HEK293T (cell line): ENCODE measurements at regions of chr3 and their contacts with region 1.

Region 1: DNA sequence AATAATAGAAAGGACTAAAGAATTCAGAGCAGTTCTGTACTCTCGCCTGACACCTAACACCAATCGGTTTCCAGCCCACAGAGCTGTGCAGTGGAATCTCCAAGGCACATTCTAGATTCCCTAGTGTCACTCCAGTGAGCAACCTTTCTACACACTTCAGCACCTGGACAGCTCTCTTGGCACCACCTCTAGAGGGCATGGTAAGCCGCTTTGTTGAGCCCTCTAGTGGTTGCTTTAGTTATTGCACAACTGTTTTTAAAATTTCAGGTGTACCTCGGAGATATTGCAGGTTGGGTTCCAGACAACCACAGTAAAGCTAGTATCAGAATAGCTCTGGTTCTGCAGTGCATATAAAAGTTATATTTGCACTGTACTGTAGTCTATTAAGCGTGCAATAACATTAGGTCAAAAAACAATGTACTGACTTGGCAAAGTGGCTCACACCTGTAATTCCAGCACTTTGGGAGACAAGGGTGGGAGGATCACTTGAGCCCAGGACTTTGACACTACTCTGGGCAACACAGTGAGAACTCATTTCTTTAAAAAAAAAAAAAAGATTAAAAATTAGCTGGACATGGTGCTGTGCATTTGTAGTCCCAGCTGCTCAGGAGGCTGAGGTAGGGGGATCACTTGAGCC is 26.5 kb upstream of the ERC2 start:
- DNase-seq: peak; percentile 84

Region 2: GRCh38 chr3:56361731-56362130 is 133.1 kb before region 1 on chr3:
- CTCF ChIA-PET with region 1: interaction called, 10 read pairs
- POLR2A ChIA-PET with region 1: no interaction called
- DNase-seq: no peak

Region 3: GRCh38 chr3:56519232-56519631 is 24.4 kb after region 1 on chr3:
- CTCF ChIA-PET with region 1: no interaction called
- POLR2A ChIA-PET with region 1: no interaction called
- DNase-seq: no peak